Activated B cell treated with CpG ODN at 0.5 μM for 24 hours (primary cell): ENCODE measurements at regions of chr6 and their contacts with region 1.

Region 1: GRCh38 chr6:15023448-15023847 is 222.4 kb upstream of the JARID2 start:
- DNase-seq: no peak
- ATAC-seq: peak; percentile 77
- H3K4me3 Mint-ChIP-seq: peak overlapping the region; percentile 5
- H3K27ac Mint-ChIP-seq: peak overlapping the region; percentile 60
- H3K4me1 Mint-ChIP-seq: peaks cover 10% of the 10 kb centered on the region
- H3K27me3 Mint-ChIP-seq: peaks cover 8% of the 10 kb centered on the region
- CTCF ChIP-seq: no peak

Region 2: GRCh38 chr6:14365393-14365792 is 658.1 kb before region 1 on chr6:
- CTCF ChIA-PET with region 1: no interaction called
- POLR2A ChIA-PET with region 1: no interaction called
- intact Hi-C with region 1: no loop called
- DNase-seq: no peak
- ATAC-seq: no peak
- H3K4me3 Mint-ChIP-seq: no peak overlapping the region
- H3K27ac Mint-ChIP-seq: no peak overlapping the region
- H3K4me1 Mint-ChIP-seq: peaks cover 22% of the 10 kb centered on the region
- H3K27me3 Mint-ChIP-seq: no peaks in the 10 kb centered on the region
- CTCF ChIP-seq: no peak

Region 3: GRCh38 chr6:15008269-15008668 is 15.2 kb before region 1 on chr6:
- CTCF ChIA-PET with region 1: no interaction called
- POLR2A ChIA-PET with region 1: no interaction called
- intact Hi-C with region 1: no loop called
- DNase-seq: no peak
- ATAC-seq: no peak
- H3K4me3 Mint-ChIP-seq: no peak overlapping the region
- H3K27ac Mint-ChIP-seq: no peak overlapping the region
- H3K4me1 Mint-ChIP-seq: peaks cover 13% of the 10 kb centered on the region
- H3K27me3 Mint-ChIP-seq: no peaks in the 10 kb centered on the region
- CTCF ChIP-seq: no peak

Region 4: DNA sequence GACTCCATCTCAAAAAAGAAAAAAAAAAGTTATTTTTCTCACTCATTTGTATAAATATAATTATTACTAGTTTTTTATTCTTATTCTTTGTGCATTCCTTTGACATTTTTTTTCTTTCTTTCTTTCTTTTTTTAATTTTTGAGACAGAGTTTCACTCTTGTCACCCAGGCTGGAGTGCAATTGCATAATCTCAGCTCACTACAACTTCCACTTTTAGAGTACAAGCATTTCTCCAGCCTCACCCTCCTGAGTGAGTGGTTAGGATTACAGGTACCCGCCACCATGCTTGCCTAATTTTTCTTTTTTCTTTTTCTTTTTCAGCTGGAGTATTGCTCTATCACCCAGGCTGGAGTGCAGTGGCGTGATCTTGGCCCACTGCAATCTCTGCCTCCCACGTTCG is 171.0 kb after region 1 on chr6:
- CTCF ChIA-PET with region 1: no interaction called
- POLR2A ChIA-PET with region 1: interaction called, 10 read pairs
- intact Hi-C with region 1: no loop called
- DNase-seq: no peak
- ATAC-seq: no peak
- H3K4me3 Mint-ChIP-seq: no peak overlapping the region
- H3K27ac Mint-ChIP-seq: no peak overlapping the region
- H3K4me1 Mint-ChIP-seq: no peaks in the 10 kb centered on the region
- H3K27me3 Mint-ChIP-seq: peaks cover 2% of the 10 kb centered on the region
- CTCF ChIP-seq: no peak